Esophagus muscularis mucosa (tissue), 4 donors: ENCODE measurements at regions of chr6 and their contacts with region 1.

Region 1: GRCh38 chr6:53544470-53545308 is at the start of gene GCLC:
- DNase-seq: peak; percentile 98
- H3K4me3 ChIP-seq: peak within 1 kb of the TSS; percentile 77 to 98 (median 86)
- H3K27ac ChIP-seq: peak within 1 kb of the TSS; percentile 95 to 99 (median 98)
- H3K4me1 ChIP-seq: peaks cover 25 to 72% (median 68%) of the 10 kb centered on the region in 4 donors
- H3K27me3 ChIP-seq: no peaks in the 10 kb centered on the region
- CTCF ChIP-seq: peak; percentile 72 to 83 (median 78)
- EP300 ChIP-seq: no peak
- POLR2A ChIP-seq: peak; percentile 58
- total RNA-seq, gene GCLC: 57.7 to 70.8 (median 64.6) TPM

Region 2: DNA sequence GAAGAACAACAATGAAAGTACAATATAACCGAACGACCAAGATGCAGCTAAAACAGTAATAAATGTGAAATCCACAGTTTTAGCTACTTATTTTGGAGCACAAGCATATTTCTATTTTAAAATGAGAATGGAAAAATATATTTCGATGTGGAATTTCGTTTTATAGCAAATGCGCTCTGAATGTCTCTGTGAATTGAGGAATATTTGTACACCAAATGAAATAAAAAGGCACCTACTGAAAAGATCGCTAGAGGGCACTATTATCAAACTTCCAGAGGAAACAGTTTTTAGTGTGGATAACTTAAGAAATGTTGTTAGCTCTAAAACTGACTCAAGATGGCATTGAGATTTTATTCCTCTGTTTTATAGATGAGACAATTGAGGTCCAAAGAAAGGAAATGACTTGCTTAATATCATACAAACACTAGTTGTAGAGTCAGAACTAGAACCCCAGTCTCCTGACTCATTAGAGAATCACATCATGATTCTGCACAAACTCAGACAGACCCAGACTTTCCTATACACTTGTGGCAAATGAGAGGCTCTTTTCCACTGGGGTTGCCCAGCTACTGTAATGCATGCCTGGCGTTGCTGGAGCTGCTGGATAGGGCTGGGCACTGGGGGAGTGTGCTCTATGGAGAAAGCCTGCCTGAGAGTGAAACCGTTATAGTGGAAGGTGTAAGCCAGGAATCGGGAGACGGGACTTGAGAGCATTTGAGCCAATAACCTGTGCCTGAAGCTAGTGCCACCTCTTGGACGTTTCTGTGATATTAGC is 51.6 kb before region 1 on chr6:
- intact Hi-C with region 1: loop called (anchors 5 kb)
- DNase-seq: no peak
- H3K4me3 ChIP-seq: peak overlapping the region; percentile 13 to 32 (median 22)
- H3K27ac ChIP-seq: peak overlapping the region in 3 of 4 donors; percentile 22 to 60 (median 56)
- H3K4me1 ChIP-seq: peaks cover 0 to 49% (median 47%) of the 10 kb centered on the region in 4 donors
- H3K27me3 ChIP-seq: no peaks in the 10 kb centered on the region
- CTCF ChIP-seq: peak; percentile 67 to 78 (median 71)
- EP300 ChIP-seq: no peak
- POLR2A ChIP-seq: no peak

Region 3: GRCh38 chr6:53504512-53504911 is 40.2 kb before region 1 on chr6:
- intact Hi-C with region 1: loop called (anchors 5 kb)
- DNase-seq: no peak
- H3K4me3 ChIP-seq: no peak overlapping the region
- H3K27ac ChIP-seq: no peak overlapping the region
- H3K4me1 ChIP-seq: no peaks in the 10 kb centered on the region
- H3K27me3 ChIP-seq: no peaks in the 10 kb centered on the region
- CTCF ChIP-seq: no peak
- EP300 ChIP-seq: no peak
- POLR2A ChIP-seq: no peak

Region 4: GRCh38 chr6:53615633-53616449 is 71.2 kb after region 1 on chr6:
- intact Hi-C with region 1: no loop called
- DNase-seq: no peak
- H3K4me3 ChIP-seq: no peak overlapping the region
- H3K27ac ChIP-seq: no peak overlapping the region
- H3K4me1 ChIP-seq: peaks cover 0 to 11% (median 2%) of the 10 kb centered on the region in 4 donors
- H3K27me3 ChIP-seq: no peaks in the 10 kb centered on the region
- CTCF ChIP-seq: no peak
- EP300 ChIP-seq: no peak
- POLR2A ChIP-seq: no peak